ENCODE measurements at regions of chr10 and their contacts with region 1.

Region 1: GRCh38 chr10:52215745-52216361 is 98.2 kb upstream of the DKK1 start:
- DNase-seq: no peak
- H3K4me3 ChIP-seq: no peak overlapping the region
- H3K27ac ChIP-seq: peak overlapping the region in 5 of 8 donors; percentile 44 to 64 (median 56)
- H3K4me1 ChIP-seq: peaks cover 5 to 39% (median 17%) of the 10 kb centered on the region in 6 donors
- H3K27me3 ChIP-seq: no peaks in the 10 kb centered on the region
- CTCF ChIP-seq: peak; percentile 30 to 77 (median 70)
- POLR2A ChIP-seq: no peak

Region 2: GRCh38 chr10:51001587-51001986 is 1214.3 kb before region 1 on chr10:
- intact Hi-C with region 1: loop called (anchors 5 kb)
- DNase-seq: no peak
- H3K4me3 ChIP-seq: no peak overlapping the region
- H3K27ac ChIP-seq: no peak overlapping the region
- H3K4me1 ChIP-seq: peaks cover 0 to 8% (median 0%) of the 10 kb centered on the region in 6 donors
- H3K27me3 ChIP-seq: peaks cover 0 to 13% (median 0%) of the 10 kb centered on the region in 7 donors
- CTCF ChIP-seq: peak in 10 of 11 experiments; percentile 11 to 59 (median 37)
- POLR2A ChIP-seq: no peak

Region 3: DNA sequence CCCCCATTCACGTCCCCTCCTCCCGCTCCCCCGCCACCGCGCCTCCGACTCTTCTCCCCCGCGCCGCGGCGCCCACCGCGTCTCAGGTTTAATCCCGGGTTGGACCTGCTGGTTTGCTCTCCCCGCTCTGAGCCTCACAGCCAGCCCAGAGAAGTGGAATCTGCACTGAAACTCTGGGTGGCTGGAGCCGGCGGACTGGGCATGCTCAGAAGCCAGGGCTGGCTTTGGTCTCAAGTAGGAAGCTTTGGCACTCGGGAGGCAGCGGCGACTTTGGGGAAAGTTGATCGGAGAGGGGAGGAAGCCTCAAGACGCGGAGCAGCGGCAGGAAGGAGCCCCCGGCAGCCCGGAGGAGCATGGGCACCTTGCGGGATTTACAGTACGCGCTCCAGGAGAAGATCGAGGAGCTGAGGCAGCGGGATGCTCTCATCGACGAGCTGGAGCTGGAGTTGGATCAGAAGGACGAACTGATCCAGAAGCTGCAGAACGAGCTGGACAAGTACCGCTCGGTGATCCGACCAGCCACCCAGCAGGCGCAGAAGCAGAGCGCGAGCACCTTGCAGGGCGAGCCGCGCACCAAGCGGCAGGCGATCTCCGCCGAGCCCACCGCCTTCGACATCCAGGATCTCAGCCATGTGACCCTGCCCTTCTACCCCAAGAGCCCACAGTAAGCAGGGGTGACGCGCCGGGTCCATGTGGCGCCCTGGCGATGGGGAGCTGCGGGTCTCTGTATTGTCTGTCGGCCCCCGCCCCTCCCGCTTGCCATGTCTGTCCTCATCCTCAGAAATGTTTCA is 1141.4 kb before region 1 on chr10 and contains the start of gene PRKG1:
- intact Hi-C with region 1: loop called (anchors 5 kb)
- DNase-seq: peak; percentile 79
- H3K4me3 ChIP-seq: peak within 1 kb of the TSS; percentile 11 to 63 (median 44)
- H3K27ac ChIP-seq: peak within 1 kb of the TSS in 7 of 8 donors; percentile 44 to 75 (median 67)
- H3K4me1 ChIP-seq: peaks cover 0 to 28% (median 15%) of the 10 kb centered on the region in 6 donors
- H3K27me3 ChIP-seq: peaks cover 0 to 63% (median 31%) of the 10 kb centered on the region in 7 donors
- CTCF ChIP-seq: no peak
- POLR2A ChIP-seq: no peak
- total RNA-seq, gene PRKG1: 6.1 to 10.5 (median 7.9) TPM